Naive thymus-derived CD4-positive, alpha-beta T cell (primary cell): ENCODE measurements at regions of chr5 and their contacts with region 1.

Region 1: DNA sequence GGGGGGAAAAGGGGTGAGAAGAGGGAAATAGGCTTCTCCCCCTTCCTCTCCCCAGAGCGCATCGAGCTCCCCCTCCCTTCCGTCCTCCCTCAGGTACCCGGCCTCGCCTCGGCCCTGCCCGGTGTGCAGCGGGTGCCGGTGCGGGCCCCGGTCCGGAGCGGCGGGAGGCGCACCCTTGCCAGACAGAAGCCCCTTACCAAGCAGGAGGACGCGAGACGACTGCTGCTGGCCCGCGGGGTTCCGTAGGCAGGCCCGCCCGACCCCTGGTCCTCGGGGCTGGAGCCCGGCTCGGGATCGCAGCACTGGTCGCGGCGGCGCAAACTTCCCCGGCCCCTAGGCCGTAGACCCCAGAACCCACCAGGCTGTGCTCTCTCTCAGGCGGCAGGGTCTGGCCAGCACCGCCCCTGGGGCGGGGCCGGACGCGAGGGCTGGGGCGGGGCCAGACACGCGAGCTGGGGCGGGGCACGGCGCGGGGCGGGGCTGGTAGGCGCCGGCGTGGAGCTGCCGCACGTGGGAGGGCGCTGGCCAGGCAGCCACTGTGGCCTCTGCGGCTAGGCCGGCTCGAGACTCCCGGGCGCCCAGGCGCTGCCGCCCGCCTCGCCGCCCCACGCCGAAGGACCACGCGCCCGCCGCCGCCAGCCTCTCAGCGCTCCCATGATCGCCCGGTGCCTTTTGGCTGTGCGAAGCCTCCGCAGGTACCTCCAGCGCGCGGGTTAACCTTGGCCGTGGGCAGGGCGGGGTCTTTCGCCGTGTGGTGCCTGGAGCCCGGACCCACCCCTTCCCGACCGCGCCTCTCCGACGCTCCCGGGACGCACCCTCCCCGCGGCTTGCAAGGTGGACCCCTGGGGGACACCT is at the starts of genes NLN and SGTB:
- DNase-seq: peak; percentile 65 to 93 (median 83)
- ATAC-seq: peak; percentile 97
- H3K4me3 ChIP-seq: peak within 1 kb of the TSS; percentile 75
- H3K4me3 Mint-ChIP-seq: peak within 1 kb of the TSS in 6 of 10 donors; percentile 85 to 97 (median 92)
- H3K27ac ChIP-seq: peak within 1 kb of the TSS; percentile 97
- H3K27ac Mint-ChIP-seq: peak within 1 kb of the TSS; percentile 74 to 91 (median 86)
- H3K4me1 ChIP-seq: peaks cover 22 to 33% of the 10 kb centered on the region in 2 donors
- H3K4me1 Mint-ChIP-seq: peaks cover 9 to 36% (median 15%) of the 10 kb centered on the region in 7 donors
- H3K27me3 ChIP-seq: no peaks in the 10 kb centered on the region
- H3K27me3 Mint-ChIP-seq: no peaks in the 10 kb centered on the region
- total RNA-seq, gene NLN: 3.5 to 11.9 (median 4.1) TPM
- total RNA-seq, gene SGTB: 12.8 to 59.5 (median 50.8) TPM

Region 2: GRCh38 chr5:65035211-65036206 is 686.4 kb before region 1 on chr5:
- CTCF ChIA-PET with region 1: no interaction called
- POLR2A ChIA-PET with region 1: no interaction called
- intact Hi-C with region 1: loop called in 1 of 2 experiments (anchors 5 kb)
- DNase-seq: peak; percentile 60 to 92 (median 85)
- ATAC-seq: peak; percentile 88
- H3K4me3 ChIP-seq: peak overlapping the region; percentile 78
- H3K4me3 Mint-ChIP-seq: peak overlapping the region; percentile 74 to 94 (median 82)
- H3K27ac ChIP-seq: peak overlapping the region; percentile 84
- H3K27ac Mint-ChIP-seq: peak overlapping the region; percentile 84 to 96 (median 90)
- H3K4me1 ChIP-seq: peaks cover 20% of the 10 kb centered on the region in 2 donors
- H3K4me1 Mint-ChIP-seq: peaks cover 3 to 36% (median 29%) of the 10 kb centered on the region in 7 donors
- H3K27me3 ChIP-seq: no peaks in the 10 kb centered on the region
- H3K27me3 Mint-ChIP-seq: no peaks in the 10 kb centered on the region

Region 3: DNA sequence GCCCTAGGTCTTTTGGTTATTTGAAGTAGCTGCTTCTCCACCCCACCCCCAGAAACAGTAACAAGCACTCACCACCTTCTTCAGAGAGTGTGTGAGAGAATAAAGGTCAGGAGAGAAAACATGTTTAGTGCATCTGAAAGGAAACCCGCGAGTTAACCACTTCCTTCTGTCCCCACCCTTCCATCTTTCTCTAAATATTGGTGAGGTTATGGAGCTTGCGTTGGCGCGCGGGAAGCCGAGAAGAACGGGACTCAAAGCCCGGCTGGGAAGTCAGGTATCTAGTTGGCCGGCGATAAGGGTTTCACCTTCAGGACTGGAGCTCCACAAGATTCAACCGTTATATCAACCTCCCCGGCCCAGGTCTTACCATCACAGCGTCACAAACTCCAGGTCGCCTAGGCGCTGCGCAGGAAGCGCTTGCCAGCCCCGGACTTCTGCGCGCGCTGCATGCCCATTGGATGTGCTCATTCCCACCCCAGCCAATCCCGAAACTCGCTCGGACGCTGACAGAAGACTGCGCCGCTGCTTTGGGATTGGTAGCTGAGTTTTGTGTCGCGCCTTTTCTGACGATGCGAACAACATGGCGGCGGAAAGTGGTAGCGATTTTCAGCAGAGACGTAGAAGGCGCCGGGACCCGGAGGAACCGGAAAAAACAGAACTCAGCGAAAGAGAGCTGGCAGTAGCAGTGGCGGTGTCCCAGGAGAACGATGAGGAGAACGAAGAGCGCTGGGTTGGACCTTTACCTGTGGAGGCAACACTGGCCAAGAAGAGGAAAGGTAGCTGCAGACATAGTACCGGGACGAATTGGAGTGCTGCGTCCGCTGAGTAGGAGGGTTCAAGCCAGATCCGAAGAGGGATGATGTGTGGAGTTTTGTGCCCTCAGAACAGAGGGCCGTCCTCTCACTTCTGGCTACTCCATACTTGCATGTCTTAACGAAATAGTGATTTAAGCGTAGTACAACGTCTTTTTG is 158.9 kb before region 1 on chr5 and contains the starts of genes CENPK and PPWD1:
- CTCF ChIA-PET with region 1: no interaction called
- POLR2A ChIA-PET with region 1: interaction called, 12 read pairs
- intact Hi-C with region 1: loop called (anchors 1 to 2 kb)
- DNase-seq: peak; percentile 83 to 97 (median 94)
- ATAC-seq: peak; percentile 99
- H3K4me3 ChIP-seq: peak within 1 kb of the TSS; percentile 93
- H3K4me3 Mint-ChIP-seq: peak within 1 kb of the TSS; percentile 92 to 99 (median 96)
- H3K27ac ChIP-seq: peak within 1 kb of the TSS; percentile 93
- H3K27ac Mint-ChIP-seq: peak within 1 kb of the TSS; percentile 97 to 100 (median 98)
- H3K4me1 ChIP-seq: peaks cover 30% of the 10 kb centered on the region in 2 donors
- H3K4me1 Mint-ChIP-seq: peaks cover 22 to 79% (median 59%) of the 10 kb centered on the region in 7 donors
- H3K27me3 ChIP-seq: no peaks in the 10 kb centered on the region
- H3K27me3 Mint-ChIP-seq: no peaks in the 10 kb centered on the region
- total RNA-seq, gene CENPK: 7.2 to 78.8 (median 14.1) TPM
- total RNA-seq, gene PPWD1: 61.7 to 104 (median 81.2) TPM

Region 4: GRCh38 chr5:65672796-65673195 is 49.2 kb before region 1 on chr5:
- CTCF ChIA-PET with region 1: no interaction called
- POLR2A ChIA-PET with region 1: no interaction called
- intact Hi-C with region 1: loop called in 1 of 2 experiments (anchors 2 kb)
- DNase-seq: no peak
- ATAC-seq: no peak
- H3K4me3 ChIP-seq: no peak overlapping the region
- H3K4me3 Mint-ChIP-seq: no peak overlapping the region
- H3K27ac ChIP-seq: no peak overlapping the region
- H3K27ac Mint-ChIP-seq: peak overlapping the region in 4 of 9 donors; percentile 8 to 67 (median 25)
- H3K4me1 ChIP-seq: no peaks in the 10 kb centered on the region
- H3K4me1 Mint-ChIP-seq: peaks cover 7 to 29% (median 24%) of the 10 kb centered on the region in 7 donors
- H3K27me3 ChIP-seq: no peaks in the 10 kb centered on the region
- H3K27me3 Mint-ChIP-seq: no peaks in the 10 kb centered on the region

Region 5: GRCh38 chr5:65760504-65761275 is 38.7 kb after region 1 on chr5:
- CTCF ChIA-PET with region 1: no interaction called
- POLR2A ChIA-PET with region 1: interaction called, 5 read pairs
- intact Hi-C with region 1: loop called in 1 of 2 experiments (anchors 1 kb)
- DNase-seq: peak in 7 of 9 donors; percentile 53 to 81 (median 67)
- ATAC-seq: peak; percentile 95
- H3K4me3 ChIP-seq: no peak overlapping the region
- H3K4me3 Mint-ChIP-seq: peak overlapping the region in 3 of 10 donors; percentile 2 to 24 (median 4)
- H3K27ac ChIP-seq: no peak overlapping the region
- H3K27ac Mint-ChIP-seq: peak overlapping the region in 3 of 9 donors; percentile 0 to 68 (median 23)
- H3K4me1 ChIP-seq: peaks cover 0 to 4% of the 10 kb centered on the region in 2 donors
- H3K4me1 Mint-ChIP-seq: peaks cover 3 to 10% (median 6%) of the 10 kb centered on the region in 7 donors
- H3K27me3 ChIP-seq: no peaks in the 10 kb centered on the region
- H3K27me3 Mint-ChIP-seq: no peaks in the 10 kb centered on the region

Region 6: DNA sequence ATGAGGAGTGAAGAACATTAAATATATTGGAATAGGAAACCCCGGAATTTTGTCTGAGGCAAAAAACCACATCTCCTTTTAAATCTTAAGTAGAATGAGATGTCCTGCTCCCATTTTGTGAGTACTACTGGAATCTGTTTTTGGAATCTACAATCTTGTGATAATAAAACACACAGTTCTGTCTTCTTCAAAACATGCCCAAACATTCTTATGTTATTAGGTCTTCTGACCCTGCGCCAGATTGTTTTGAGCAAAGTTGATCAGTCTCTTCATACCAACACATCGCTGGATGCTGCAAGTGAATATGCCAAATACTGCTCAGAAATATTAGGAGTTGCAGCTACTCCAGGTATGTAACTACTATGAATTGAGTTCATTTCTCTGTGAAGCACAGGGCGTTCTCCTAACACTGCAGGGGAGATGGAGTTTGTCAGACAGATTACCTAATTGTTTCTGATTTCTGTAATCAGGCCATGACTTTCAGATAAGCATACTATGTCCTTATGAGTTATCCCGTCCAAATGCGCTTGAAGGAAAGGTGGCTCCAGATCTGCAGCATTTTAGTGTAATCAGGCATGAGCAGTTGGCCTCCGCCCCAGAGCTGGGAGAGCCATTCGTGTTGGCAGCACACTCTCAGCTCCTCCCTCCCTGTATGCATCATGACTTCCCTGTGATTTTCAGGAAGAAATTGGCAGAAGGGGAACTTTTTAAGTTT is 88.0 kb after region 1 on chr5:
- CTCF ChIA-PET with region 1: no interaction called
- POLR2A ChIA-PET with region 1: no interaction called
- intact Hi-C with region 1: no loop called
- DNase-seq: no peak
- ATAC-seq: no peak
- H3K4me3 ChIP-seq: no peak overlapping the region
- H3K4me3 Mint-ChIP-seq: no peak overlapping the region
- H3K27ac ChIP-seq: no peak overlapping the region
- H3K27ac Mint-ChIP-seq: no peak overlapping the region
- H3K4me1 ChIP-seq: no peaks in the 10 kb centered on the region
- H3K4me1 Mint-ChIP-seq: peaks cover 7 to 24% (median 16%) of the 10 kb centered on the region in 7 donors
- H3K27me3 ChIP-seq: no peaks in the 10 kb centered on the region
- H3K27me3 Mint-ChIP-seq: no peaks in the 10 kb centered on the region

Region 7: GRCh38 chr5:66821688-66822429 is 1099.9 kb after region 1 on chr5:
- CTCF ChIA-PET with region 1: no interaction called
- POLR2A ChIA-PET with region 1: no interaction called
- intact Hi-C with region 1: loop called in 1 of 2 experiments (anchors 5 kb)
- DNase-seq: peak in 2 of 9 donors; percentile 2 to 53
- ATAC-seq: peak; percentile 36
- H3K4me3 ChIP-seq: no peak overlapping the region
- H3K4me3 Mint-ChIP-seq: peak overlapping the region in 3 of 10 donors; percentile 30 to 85 (median 32)
- H3K27ac ChIP-seq: no peak overlapping the region
- H3K27ac Mint-ChIP-seq: peak overlapping the region in 6 of 9 donors; percentile 11 to 97 (median 54)
- H3K4me1 ChIP-seq: peaks cover 0 to 12% of the 10 kb centered on the region in 2 donors
- H3K4me1 Mint-ChIP-seq: peaks cover 0 to 56% (median 12%) of the 10 kb centered on the region in 7 donors
- H3K27me3 ChIP-seq: no peaks in the 10 kb centered on the region
- H3K27me3 Mint-ChIP-seq: no peaks in the 10 kb centered on the region